ENCODE measurements at regions of chr12 and their contacts with region 1.

Region 1: DNA sequence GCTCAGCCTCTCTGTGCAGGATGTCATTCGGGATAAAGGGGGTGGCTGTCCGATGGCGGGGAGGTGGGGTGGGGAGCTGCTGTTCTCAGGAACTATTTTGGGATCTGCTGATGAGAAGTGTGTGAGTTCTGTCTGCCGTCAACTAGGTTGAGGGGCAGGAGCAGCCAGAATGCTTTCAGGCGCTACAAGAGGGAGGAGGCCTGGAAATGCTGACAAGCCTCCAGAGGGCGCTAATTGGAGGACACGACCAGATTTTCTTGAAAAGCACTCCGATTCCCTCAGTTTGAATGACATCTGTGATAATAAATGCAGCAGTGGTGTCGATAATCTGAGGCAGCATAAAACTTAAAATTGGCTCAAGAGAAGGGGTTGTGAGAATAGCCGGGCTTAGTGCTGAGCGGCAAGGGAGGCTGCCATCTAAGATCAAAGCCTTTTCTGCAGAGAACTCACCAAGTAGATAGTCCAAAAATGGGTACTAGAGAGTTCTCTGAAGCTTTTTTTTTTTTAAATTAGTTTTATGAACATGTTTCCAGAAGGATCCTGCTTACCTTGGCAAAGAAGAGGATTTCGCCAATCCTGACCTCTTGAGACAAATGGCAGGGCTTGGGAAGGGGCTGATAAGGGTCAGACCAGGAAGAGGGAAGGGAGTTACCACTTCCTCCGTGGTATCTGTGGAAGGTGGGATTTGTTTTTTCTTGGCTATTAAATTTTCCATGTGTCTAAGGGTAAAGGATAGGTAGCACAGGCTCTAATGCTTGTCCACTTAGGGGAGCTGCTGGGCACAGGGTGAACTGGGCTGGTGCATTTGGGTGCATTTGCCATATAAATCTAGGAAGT is 94.4 kb downstream of the CRACR2A start:
- DNase-seq: peak; percentile 36
- ATAC-seq: peak; percentile 64
- H3K4me3 ChIP-seq: no peak overlapping the region
- H3K27ac ChIP-seq: no peak overlapping the region
- H3K4me1 ChIP-seq: no peaks in the 10 kb centered on the region
- H3K27me3 ChIP-seq: peaks cover 0 to 1% of the 10 kb centered on the region in 2 experiments; a peak in 1 of 5 replicates
- CTCF ChIP-seq: peak; percentile 59
- EP300 ChIP-seq: no peak
- POLR2A ChIP-seq: no peak
- RAD21 ChIP-seq: no peak

Region 2: GRCh38 chr12:3683670-3684069 is 25.1 kb after region 1 on chr12:
- CTCF ChIA-PET with region 1: no interaction called
- POLR2A ChIA-PET with region 1: no interaction called
- in situ Hi-C with region 1: no loop called
- intact Hi-C with region 1: loop called (anchors 2 kb)
- DNase-seq: no peak
- ATAC-seq: no peak
- H3K4me3 ChIP-seq: no peak overlapping the region
- H3K27ac ChIP-seq: no peak overlapping the region
- H3K4me1 ChIP-seq: no peaks in the 10 kb centered on the region
- H3K27me3 ChIP-seq: no peaks in the 10 kb centered on the region
- CTCF ChIP-seq: no peak
- EP300 ChIP-seq: no peak
- POLR2A ChIP-seq: no peak
- RAD21 ChIP-seq: no peak

Region 3: GRCh38 chr12:3757261-3757660 is 98.7 kb after region 1 on chr12:
- CTCF ChIA-PET with region 1: no interaction called
- POLR2A ChIA-PET with region 1: no interaction called
- in situ Hi-C with region 1: no loop called
- intact Hi-C with region 1: no loop called
- DNase-seq: peak; percentile 10
- ATAC-seq: peak; percentile 90
- H3K4me3 ChIP-seq: no peak overlapping the region
- H3K27ac ChIP-seq: no peak overlapping the region
- H3K4me1 ChIP-seq: peaks cover 14% of the 10 kb centered on the region
- H3K27me3 ChIP-seq: no peaks in the 10 kb centered on the region
- CTCF ChIP-seq: no peak
- EP300 ChIP-seq: no peak
- POLR2A ChIP-seq: no peak
- RAD21 ChIP-seq: no peak

Region 4: DNA sequence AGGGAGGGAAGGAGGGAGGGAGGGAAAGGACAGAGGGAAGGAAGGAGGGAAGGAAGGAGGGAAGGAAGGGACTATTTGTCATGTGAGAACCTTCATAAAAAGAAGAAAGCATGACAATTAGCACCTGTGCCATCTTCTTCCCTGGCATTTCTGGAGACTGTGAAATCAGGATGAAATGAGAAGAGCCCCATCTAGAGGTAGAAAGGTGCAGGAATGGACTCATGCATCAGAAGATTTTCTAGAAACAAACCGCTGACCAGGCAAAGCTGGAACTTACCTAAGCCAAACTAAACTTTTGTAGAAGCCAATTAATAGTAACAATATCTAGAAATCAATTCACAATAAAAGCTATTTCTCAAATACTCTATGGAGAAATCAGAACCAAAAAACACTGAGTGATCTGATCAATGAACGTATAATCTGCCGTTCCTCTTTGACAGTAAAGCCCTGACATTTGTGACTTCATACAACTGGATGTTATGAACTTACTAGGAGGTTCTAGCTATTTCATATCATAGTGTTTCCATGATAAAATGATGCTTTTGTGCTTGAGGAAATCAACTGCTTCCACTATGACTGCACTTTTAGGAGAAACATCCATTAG is 118.8 kb after region 1 on chr12:
- CTCF ChIA-PET with region 1: no interaction called
- POLR2A ChIA-PET with region 1: no interaction called
- in situ Hi-C with region 1: loop called (anchors 5 kb)
- intact Hi-C with region 1: loop called (anchors 2 kb)
- DNase-seq: peak; percentile 30
- ATAC-seq: peak; percentile 66
- H3K4me3 ChIP-seq: no peak overlapping the region
- H3K27ac ChIP-seq: no peak overlapping the region
- H3K4me1 ChIP-seq: no peaks in the 10 kb centered on the region
- H3K27me3 ChIP-seq: no peaks in the 10 kb centered on the region; a peak in 1 of 5 replicates
- CTCF ChIP-seq: peak; percentile 74
- EP300 ChIP-seq: no peak
- POLR2A ChIP-seq: no peak
- RAD21 ChIP-seq: no peak

Region 5: DNA sequence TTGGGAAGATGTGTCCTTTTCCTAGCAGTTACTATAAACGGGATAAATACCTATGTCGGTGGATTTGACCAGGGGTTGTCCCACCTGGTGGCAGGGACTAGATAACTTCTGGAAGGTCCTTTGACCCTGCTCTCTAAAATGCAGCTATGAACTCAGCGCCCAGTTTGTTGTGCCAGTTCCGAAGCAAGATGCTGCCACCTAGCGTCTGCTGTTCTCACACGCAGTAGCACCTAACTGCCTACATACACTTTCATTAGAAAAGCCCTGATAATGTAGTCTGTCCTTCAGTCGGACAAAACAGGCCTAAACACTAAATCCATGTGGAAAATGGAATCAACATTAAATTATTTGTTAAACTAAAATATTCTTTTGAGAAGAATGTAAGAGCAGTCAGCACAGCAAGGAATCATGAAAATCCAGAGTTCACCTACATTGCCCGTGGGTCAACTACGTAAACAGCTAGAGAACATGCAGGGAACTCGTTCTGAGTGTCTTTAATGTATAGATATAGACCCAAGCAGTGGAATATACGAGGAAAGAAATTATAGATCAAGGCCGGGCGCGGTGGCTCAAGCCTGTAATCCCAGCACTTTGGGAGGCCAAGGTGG is 145.4 kb after region 1 on chr12:
- CTCF ChIA-PET with region 1: no interaction called
- POLR2A ChIA-PET with region 1: no interaction called
- in situ Hi-C with region 1: loop called (anchors 10 kb)
- intact Hi-C with region 1: loop called (anchors 2 kb)
- DNase-seq: peak; percentile 59
- ATAC-seq: peak; percentile 92
- H3K4me3 ChIP-seq: no peak overlapping the region
- H3K27ac ChIP-seq: no peak overlapping the region
- H3K4me1 ChIP-seq: 0 out of 2 replicates have a peak, but pooled peaks cover 2% of the 10 kb centered on the region
- H3K27me3 ChIP-seq: no peaks in the 10 kb centered on the region
- CTCF ChIP-seq: peak; percentile 91
- EP300 ChIP-seq: no peak
- POLR2A ChIP-seq: no peak
- RAD21 ChIP-seq: peak; percentile 72